Gastrocnemius medialis (tissue), 4 donors: ENCODE measurements at regions of chr17 and their contacts with region 1.

Region 1: DNA sequence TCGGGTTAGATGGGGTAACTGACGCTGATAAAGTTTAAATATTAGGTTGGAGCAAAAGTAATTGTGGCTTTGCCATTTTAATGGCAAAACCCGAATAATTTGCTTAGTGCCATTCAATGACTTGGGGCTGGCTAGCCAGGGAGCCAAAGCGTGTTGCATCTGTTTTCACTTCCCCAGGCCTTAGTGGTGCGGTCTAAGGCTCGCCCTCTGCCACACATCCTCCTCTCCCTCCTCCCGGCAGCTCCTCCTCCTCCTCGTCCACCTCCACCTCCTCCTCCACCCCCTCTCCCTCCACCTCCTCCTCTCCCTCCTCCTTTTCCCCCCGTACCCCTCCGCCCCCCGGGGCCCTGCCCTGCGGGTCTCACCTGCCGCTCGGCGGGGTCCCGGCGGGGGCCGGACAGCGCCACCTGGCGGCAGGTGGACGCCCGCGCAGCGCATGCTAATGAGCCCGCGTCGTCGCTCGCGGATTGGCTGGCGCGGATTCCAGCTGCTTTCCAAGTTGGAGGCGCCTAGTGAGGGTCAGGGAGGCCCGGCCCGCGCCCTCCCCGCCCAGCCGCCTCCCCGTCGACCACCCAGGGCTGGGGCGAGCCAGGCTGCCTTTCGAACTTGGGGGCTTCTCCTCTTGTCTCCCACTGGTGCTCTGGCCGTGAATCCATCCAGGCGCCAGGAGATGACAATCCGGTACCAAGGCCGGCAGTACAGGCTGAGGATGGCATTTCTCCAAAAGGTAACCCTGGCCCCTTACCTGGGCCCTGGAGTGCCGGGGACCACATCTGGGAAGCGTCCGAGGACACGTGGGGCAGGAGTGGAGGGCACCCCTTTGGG is 36.6 kb upstream of the RGS9 start:
- DNase-seq: peak; percentile 66 to 78
- ATAC-seq: peak; percentile 92
- H3K4me3 ChIP-seq: peak overlapping the region; percentile 61 to 71 (median 64)
- H3K27ac ChIP-seq: peak overlapping the region; percentile 72 to 76 (median 74)
- H3K4me1 ChIP-seq: peaks cover 14 to 16% of the 10 kb centered on the region in 2 donors
- H3K27me3 ChIP-seq: no peaks in the 10 kb centered on the region
- CTCF ChIP-seq: peak; percentile 68 to 98 (median 93)
- POLR2A ChIP-seq: no peak

Region 2: DNA sequence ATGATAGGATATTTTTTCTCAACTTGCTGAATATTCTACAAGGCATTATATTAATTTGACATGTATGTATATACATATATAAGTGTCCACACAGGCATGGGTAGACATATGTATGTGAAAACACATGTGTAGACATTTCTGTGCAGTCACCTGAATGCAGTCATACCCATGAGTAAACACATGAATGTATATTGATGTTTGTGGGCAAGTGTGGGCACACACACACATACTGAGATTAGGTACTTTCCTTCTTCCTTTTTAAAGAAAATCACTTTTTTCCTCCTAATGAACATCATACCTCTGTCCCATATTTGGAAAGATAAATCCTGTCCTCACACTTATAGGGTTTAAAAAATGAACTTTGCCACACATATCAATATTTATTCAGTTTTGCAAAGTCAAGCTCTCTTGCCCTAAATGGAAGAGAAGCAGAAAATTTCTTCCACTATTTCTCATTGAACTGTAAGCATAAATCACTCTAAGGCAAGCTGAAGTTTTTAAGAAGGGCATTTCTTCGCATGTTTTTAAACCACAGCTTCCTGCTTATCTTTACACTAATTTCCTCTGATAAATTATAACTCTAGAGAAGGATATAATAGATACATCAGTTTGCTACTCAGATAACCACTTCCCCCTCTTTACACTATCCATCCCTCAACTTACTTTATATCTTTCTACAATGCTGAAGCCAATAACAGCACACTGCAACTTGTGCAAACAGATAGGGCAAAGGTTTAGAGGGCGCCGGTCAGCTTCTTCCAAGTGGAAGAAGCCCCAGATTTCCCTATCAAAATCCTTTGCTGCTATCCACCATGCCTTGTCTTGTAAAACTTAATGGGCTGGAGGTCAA is 131.7 kb before region 1 on chr17:
- in situ Hi-C with region 1: loop called in 3 of 4 experiments (anchors 10 to 25 kb)
- intact Hi-C with region 1: no loop called
- DNase-seq: no peak
- ATAC-seq: no peak
- H3K4me3 ChIP-seq: no peak overlapping the region
- H3K27ac ChIP-seq: no peak overlapping the region
- H3K4me1 ChIP-seq: peaks cover 13 to 16% of the 10 kb centered on the region in 2 donors
- H3K27me3 ChIP-seq: no peaks in the 10 kb centered on the region
- CTCF ChIP-seq: no peak
- POLR2A ChIP-seq: no peak

Region 3: GRCh38 chr17:64975329-64976087 is 125.0 kb before region 1 on chr17:
- in situ Hi-C with region 1: loop called in 1 of 4 experiments (anchors 25 kb)
- intact Hi-C with region 1: loop called (anchors 5 kb)
- DNase-seq: peak; percentile 89 to 92
- ATAC-seq: peak; percentile 90 to 94
- H3K4me3 ChIP-seq: peak overlapping the region; percentile 70 to 95 (median 84)
- H3K27ac ChIP-seq: peak overlapping the region; percentile 94 to 100 (median 98)
- H3K4me1 ChIP-seq: peaks cover 13% of the 10 kb centered on the region in 2 donors
- H3K27me3 ChIP-seq: no peaks in the 10 kb centered on the region
- CTCF ChIP-seq: peak in 1 of 5 experiments; percentile 3
- POLR2A ChIP-seq: peak; percentile 93 to 97

Region 4: GRCh38 chr17:65055348-65056261 is 44.9 kb before region 1 on chr17:
- in situ Hi-C with region 1: no loop called
- intact Hi-C with region 1: loop called (anchors 1 kb)
- DNase-seq: peak; percentile 79 to 84
- ATAC-seq: peak; percentile 60 to 72
- H3K4me3 ChIP-seq: peak overlapping the region; percentile 72 to 96 (median 90)
- H3K27ac ChIP-seq: peak overlapping the region; percentile 98 to 100 (median 99)
- H3K4me1 ChIP-seq: peaks cover 35 to 38% of the 10 kb centered on the region in 2 donors
- H3K27me3 ChIP-seq: no peaks in the 10 kb centered on the region
- CTCF ChIP-seq: no peak
- POLR2A ChIP-seq: peak; percentile 88 to 89

Region 5: GRCh38 chr17:65122836-65123756 is 22.6 kb after region 1 on chr17:
- in situ Hi-C with region 1: no loop called
- intact Hi-C with region 1: loop called (anchors 2 kb)
- DNase-seq: peak; percentile 62 to 78
- ATAC-seq: peak; percentile 91 to 98
- H3K4me3 ChIP-seq: peak overlapping the region; percentile 77 to 83 (median 79)
- H3K27ac ChIP-seq: peak overlapping the region; percentile 81 to 87 (median 85)
- H3K4me1 ChIP-seq: peaks cover 0 to 4% of the 10 kb centered on the region in 2 donors
- H3K27me3 ChIP-seq: no peaks in the 10 kb centered on the region
- CTCF ChIP-seq: no peak
- POLR2A ChIP-seq: peak in 1 of 2 donors; percentile 19

Region 6: GRCh38 chr17:65137021-65137991 is 36.8 kb after region 1 on chr17 and contains the start of gene RGS9:
- in situ Hi-C with region 1: no loop called
- intact Hi-C with region 1: loop called (anchors 2 kb)
- DNase-seq: peak; percentile 49 to 70
- ATAC-seq: peak; percentile 91 to 95
- H3K4me3 ChIP-seq: peak within 1 kb of the TSS; percentile 45 to 59 (median 57)
- H3K27ac ChIP-seq: peak within 1 kb of the TSS in 1 of 4 donors; percentile 25
- H3K4me1 ChIP-seq: peaks cover 4 to 5% of the 10 kb centered on the region in 2 donors
- H3K27me3 ChIP-seq: peaks cover 0 to 12% (median 3%) of the 10 kb centered on the region in 3 donors
- CTCF ChIP-seq: peak; percentile 89 to 98 (median 97)
- POLR2A ChIP-seq: no peak
- total RNA-seq, gene RGS9: 1.2 to 4.4 (median 2.8) TPM

Region 7: GRCh38 chr17:65147955-65148354 is 47.4 kb after region 1 on chr17:
- in situ Hi-C with region 1: no loop called
- intact Hi-C with region 1: no loop called
- DNase-seq: no peak
- ATAC-seq: no peak
- H3K4me3 ChIP-seq: no peak overlapping the region
- H3K27ac ChIP-seq: no peak overlapping the region
- H3K4me1 ChIP-seq: peaks cover 5% of the 10 kb centered on the region in 2 donors
- H3K27me3 ChIP-seq: peaks cover 0 to 7% (median 0%) of the 10 kb centered on the region in 3 donors
- CTCF ChIP-seq: no peak
- POLR2A ChIP-seq: no peak

Region 8: DNA sequence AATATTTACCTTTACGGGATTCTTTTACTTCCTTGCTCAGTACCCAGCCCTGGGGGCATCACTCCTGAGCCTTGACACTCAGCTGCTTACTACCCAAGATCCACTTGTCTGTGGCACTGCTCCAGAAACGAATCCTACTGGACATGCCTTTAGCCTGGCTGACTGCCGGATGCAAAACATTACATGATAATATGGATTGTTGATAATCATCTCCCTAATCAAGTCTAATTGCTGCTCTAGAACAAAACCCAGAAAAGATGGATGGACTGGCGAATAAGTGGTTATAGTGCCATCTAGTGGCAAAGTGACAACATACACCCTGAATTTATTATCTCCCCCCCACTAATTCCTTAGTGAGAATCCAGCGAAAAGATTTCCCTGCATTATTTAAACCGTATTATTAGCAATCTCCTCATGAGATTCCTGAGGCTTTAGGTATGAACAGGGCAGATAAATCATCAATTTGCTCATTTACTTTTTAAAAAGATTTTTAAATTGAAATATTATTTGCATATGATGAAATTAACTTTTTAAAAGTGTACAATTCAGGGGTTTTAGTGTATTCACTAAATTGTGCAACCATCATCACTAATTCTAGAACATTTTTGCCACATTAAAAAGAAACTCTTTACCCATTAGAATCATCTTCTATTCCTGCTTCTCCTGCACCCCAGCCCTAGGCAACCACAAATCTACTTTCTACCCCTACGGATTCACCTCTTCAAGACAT is 98.3 kb after region 1 on chr17:
- in situ Hi-C with region 1: loop called in 1 of 4 experiments (anchors 25 kb)
- intact Hi-C with region 1: no loop called
- DNase-seq: no peak
- ATAC-seq: peak in 1 of 2 donors; percentile 62
- H3K4me3 ChIP-seq: no peak overlapping the region
- H3K27ac ChIP-seq: no peak overlapping the region
- H3K4me1 ChIP-seq: no peaks in the 10 kb centered on the region
- H3K27me3 ChIP-seq: no peaks in the 10 kb centered on the region
- CTCF ChIP-seq: peak; percentile 50 to 78 (median 68)
- POLR2A ChIP-seq: no peak

Region 9: DNA sequence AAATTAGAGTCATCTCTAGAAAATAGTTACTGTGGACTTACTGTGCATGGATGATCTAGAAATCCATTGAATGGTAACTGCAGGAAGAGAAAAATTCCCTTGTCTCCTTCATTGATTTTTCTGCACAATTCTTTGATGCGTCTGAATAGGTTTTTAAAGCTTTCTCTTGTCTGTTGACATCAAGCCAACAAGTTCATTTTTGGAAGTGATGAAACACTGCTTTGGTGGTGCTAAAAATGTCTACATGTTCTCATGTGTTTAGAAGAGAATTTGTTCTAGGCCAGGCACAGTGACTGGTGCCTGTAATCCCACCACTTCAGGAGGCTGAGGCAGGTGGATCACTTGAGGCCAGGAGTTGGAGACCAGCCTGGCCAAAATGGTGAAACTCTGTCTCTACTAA is 518.0 kb after region 1 on chr17:
- in situ Hi-C with region 1: no loop called
- intact Hi-C with region 1: no loop called
- DNase-seq: no peak
- ATAC-seq: no peak
- H3K4me3 ChIP-seq: no peak overlapping the region
- H3K27ac ChIP-seq: no peak overlapping the region
- H3K4me1 ChIP-seq: no peaks in the 10 kb centered on the region
- H3K27me3 ChIP-seq: no peaks in the 10 kb centered on the region
- CTCF ChIP-seq: no peak
- POLR2A ChIP-seq: no peak